Esophagus squamous epithelium (tissue), 5 donors: ENCODE measurements at regions of chr5 and their contacts with region 1.

Region 1: GRCh38 chr5:10283927-10284635 is 23.6 kb downstream of the CMBL start:
- DNase-seq: peak; percentile 5
- H3K4me3 ChIP-seq: no peak overlapping the region
- H3K27ac ChIP-seq: no peak overlapping the region
- H3K4me1 ChIP-seq: peaks cover 8 to 15% (median 9%) of the 10 kb centered on the region in 3 donors
- H3K27me3 ChIP-seq: no peaks in the 10 kb centered on the region
- CTCF ChIP-seq: peak; percentile 81 to 96 (median 92)
- POLR2A ChIP-seq: no peak

Region 2: DNA sequence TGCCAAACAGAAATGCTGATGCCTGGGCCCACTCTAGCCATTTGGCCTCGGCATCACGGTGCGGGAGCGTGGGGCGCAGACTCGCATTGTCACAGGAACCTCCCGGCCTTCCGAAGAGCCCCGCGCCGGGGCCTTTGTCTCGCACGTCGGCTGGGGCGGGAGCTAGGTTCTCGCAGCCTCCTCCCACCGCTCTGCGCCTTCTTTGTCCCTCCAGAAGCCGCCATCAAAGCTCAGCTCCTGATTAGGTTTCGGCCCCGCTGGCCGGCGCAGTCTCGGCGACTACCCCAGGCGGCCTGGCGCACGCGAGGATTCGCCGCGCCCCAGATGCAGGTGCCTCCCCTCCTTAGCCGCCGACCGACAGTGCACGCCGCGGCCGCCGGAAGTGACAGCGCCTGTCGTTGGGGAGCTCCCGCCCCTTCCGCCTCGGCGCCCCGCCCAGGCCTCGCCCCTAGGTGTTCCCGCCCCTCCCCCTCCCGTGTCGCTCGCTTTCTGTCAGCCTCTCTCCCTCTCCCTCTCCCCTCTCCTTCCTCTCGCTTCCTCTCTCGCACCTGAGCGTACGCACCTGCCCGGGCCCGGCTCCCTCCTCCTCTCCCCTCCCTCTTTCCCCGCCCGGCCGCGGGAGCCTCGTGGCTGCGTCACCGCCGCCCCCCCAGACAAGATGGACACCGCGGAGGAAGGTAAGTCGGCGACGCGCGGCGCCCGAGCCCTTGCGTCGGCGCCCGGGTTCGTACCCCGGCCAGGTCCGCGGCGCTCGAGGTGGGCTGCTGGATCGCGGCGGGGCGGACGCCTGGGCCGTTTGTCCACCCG is 69.4 kb after region 1 on chr5 and contains the start of gene MARCHF6:
- intact Hi-C with region 1: loop called (anchors 10 kb)
- DNase-seq: peak; percentile 85
- H3K4me3 ChIP-seq: peak within 1 kb of the TSS; percentile 82 to 99 (median 98)
- H3K27ac ChIP-seq: peak within 1 kb of the TSS; percentile 98 to 100 (median 99)
- H3K4me1 ChIP-seq: peaks cover 9 to 57% (median 18%) of the 10 kb centered on the region in 3 donors
- H3K27me3 ChIP-seq: no peaks in the 10 kb centered on the region
- CTCF ChIP-seq: peak in 1 of 6 experiments; percentile 2
- POLR2A ChIP-seq: peak in 3 of 4 donors; percentile 81 to 96 (median 95)
- total RNA-seq, gene MARCHF6: 27.6 to 67.1 (median 37.0) TPM

Region 3: DNA sequence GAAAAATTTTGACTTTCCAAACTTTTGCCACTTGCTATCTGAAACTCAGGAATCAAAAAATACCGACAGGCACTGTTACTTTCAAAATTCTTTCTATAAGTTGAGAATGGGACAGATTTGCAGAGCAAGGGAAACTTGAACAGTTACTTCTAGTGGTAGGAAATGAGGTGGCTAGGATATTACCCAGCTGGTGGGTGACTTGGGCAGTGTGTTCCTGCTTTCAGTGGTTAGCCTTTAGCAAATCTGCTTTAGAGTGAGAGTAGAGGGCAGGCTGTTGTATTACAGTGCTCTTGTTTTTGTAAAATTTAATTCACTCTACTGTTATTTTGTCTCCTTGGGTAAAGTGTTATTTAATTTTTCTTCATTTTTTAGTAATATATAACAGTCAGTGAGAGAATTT is 117.4 kb after region 1 on chr5:
- intact Hi-C with region 1: loop called (anchors 10 kb)
- DNase-seq: no peak
- H3K4me3 ChIP-seq: no peak overlapping the region
- H3K27ac ChIP-seq: peak overlapping the region in 1 of 4 donors; percentile 5
- H3K4me1 ChIP-seq: no peaks in the 10 kb centered on the region
- H3K27me3 ChIP-seq: no peaks in the 10 kb centered on the region
- CTCF ChIP-seq: no peak
- POLR2A ChIP-seq: no peak

Region 4: DNA sequence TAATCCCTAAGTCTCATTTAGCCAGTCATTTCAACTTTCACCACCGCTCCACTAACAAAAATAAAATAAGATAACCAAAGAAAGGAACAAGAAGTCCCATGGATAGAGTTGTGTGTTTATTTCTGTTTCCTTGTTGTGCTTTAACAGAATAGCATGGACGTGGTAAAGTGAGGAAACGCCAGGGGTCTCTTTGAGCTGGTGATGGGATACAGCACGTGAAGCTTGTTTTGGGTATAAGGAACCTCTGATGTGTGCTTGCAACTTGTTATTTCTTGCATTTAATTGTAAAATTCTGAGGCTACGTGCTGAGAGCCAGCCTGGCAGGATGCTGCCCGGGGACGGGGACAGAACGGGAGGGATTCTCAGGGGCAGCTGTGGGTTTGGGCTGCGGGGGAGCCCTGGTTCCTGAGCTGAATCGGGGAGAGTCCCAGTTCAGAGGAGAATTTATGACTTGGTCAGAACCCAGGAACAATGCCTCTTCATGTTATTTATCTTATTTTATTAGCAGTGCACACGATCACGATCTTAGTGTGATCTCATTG is 343.1 kb after region 1 on chr5:
- intact Hi-C with region 1: loop called (anchors 10 kb)
- DNase-seq: no peak
- H3K4me3 ChIP-seq: peak overlapping the region in 3 of 4 donors; percentile 27 to 56 (median 33)
- H3K27ac ChIP-seq: peak overlapping the region; percentile 38 to 87 (median 82)
- H3K4me1 ChIP-seq: peaks cover 4 to 42% (median 7%) of the 10 kb centered on the region in 3 donors
- H3K27me3 ChIP-seq: no peaks in the 10 kb centered on the region
- CTCF ChIP-seq: no peak
- POLR2A ChIP-seq: no peak